Activated CD8-positive, alpha-beta memory T cell treated with anti-CD3 and anti-CD28 coated beads, Interleukin-2, amount 10 ng/mL, durations not matched to agents 7 days and 5 days (primary cell): ENCODE measurements at regions of chr16 and their contacts with region 1.

Region 1: DNA sequence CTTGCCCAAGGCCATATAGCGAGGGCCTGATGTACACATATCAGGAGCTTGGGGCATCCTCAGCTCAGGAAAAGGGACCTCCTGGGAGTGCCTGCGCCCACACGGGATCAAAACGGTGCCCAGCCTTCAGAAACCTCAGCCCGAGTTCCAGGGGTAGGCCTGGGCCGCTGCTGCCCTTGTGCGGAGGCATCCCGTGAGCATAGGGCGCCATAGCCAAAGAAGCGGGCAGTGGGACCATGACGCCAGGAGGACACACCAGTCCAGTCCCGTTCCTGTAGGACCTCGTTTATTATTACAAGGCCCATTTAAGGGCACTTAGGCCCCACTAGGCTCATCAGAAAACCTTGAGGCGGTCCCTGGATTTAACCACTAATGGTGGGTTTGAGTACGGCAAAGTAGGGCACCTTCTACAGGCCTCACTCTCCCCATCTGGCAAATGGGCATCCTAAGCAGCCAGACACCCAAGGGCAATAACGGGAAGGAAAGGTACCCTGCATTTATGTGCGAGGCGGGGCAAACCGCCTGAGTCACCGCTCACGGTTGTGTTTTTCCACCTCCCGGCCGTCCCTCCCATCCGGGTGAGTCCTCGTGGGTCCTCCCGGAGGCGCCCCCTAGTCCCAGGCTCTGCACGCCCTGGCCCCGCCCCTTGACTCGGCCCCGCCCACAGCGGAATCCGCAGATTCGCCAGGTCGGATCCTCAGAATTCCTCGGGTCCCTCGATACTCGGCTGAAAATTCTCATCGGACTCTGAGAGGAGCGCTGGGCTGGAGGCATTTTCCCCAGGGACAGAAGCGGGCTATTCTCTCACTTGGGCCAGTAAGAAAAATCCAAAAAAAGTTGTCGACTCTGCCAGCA is 726 bp upstream of the SETD1A start:
- DNase-seq: peak; percentile 92
- ATAC-seq: peak; percentile 76
- H3K4me3 Mint-ChIP-seq: peak overlapping the region; percentile 89
- H3K27ac Mint-ChIP-seq: peak overlapping the region; percentile 99
- H3K4me1 Mint-ChIP-seq: peaks cover 33% of the 10 kb centered on the region
- H3K27me3 Mint-ChIP-seq: no peaks in the 10 kb centered on the region

Region 2: DNA sequence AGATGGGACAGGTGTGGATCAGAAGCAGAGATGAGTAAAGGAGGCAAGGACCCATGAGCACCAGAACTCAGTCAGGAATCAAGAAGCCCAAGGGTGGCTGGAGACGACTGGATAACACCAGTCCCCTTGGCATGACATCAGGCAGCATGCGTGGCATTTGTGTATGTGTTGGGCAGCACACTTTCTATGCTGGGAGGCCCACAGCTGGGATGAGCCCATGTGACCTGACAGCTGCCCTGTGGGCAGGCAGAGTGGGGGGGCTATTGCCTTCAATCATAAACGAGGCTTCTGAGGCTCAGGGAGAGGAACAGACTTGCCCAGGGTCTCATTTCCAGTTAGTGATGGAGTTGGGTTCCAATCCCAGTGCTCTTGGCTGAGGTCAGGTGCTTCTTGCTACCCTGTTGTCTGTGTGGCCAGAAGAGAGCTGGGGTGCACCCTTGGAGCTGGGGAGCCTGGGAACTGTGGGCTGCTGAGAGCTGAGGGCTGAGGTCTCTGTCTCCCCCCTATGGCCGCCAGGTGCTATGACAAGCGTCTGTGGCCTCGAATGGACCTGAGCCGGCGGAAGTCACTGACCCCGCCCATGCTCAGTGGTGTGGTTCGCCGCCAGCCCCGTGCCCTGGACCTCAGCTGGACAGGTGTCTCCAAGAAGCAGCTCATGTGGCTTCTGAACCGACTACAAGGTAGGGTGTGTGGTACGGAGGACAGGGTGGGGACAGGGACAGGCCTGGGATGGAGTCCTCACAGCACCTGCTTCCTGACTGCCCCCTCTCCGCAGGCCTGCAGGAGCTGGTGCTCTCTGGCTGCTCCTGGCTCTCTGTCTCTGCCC is 15.0 kb before region 1 on chr16:
- CTCF ChIA-PET with region 1: interaction called, 21 read pairs
- DNase-seq: peak; percentile 86
- ATAC-seq: peak; percentile 96
- H3K4me3 Mint-ChIP-seq: peak overlapping the region; percentile 69
- H3K27ac Mint-ChIP-seq: peak overlapping the region; percentile 80
- H3K4me1 Mint-ChIP-seq: peaks cover 41% of the 10 kb centered on the region
- H3K27me3 Mint-ChIP-seq: no peaks in the 10 kb centered on the region

Region 3: DNA sequence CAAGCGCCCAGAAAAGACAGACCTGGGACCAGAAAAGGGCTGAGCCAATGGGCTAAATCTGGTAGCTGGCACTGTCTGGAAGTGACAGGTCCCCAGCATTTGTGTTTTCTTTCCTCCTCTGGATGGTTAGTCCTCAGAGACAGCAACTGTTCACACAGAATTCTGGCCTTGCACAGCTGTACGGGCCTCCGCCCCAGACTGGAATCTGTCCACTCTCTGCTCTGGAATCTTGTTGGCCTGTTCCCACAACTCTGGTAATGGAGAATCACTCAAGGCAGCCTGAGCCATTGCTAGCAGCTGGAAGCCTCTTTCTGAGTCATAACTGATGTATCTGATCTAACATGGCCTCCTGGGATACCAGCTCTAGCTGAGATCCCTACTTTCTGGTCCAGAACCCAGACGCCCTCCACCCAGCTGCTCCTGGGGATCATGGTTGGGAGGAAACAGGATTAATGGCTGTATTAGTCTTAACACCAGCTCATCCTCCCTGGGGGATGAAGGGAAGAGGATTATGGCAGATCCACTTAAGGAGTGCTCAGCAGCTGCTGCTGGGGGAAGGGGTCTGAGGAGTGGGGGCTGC is 108.1 kb after region 1 on chr16:
- CTCF ChIA-PET with region 1: interaction called, 13 read pairs
- DNase-seq: no peak
- ATAC-seq: peak; percentile 48
- H3K4me3 Mint-ChIP-seq: peak overlapping the region; percentile 53
- H3K27ac Mint-ChIP-seq: peak overlapping the region; percentile 90
- H3K4me1 Mint-ChIP-seq: peaks cover 63% of the 10 kb centered on the region
- H3K27me3 Mint-ChIP-seq: no peaks in the 10 kb centered on the region

Region 4: DNA sequence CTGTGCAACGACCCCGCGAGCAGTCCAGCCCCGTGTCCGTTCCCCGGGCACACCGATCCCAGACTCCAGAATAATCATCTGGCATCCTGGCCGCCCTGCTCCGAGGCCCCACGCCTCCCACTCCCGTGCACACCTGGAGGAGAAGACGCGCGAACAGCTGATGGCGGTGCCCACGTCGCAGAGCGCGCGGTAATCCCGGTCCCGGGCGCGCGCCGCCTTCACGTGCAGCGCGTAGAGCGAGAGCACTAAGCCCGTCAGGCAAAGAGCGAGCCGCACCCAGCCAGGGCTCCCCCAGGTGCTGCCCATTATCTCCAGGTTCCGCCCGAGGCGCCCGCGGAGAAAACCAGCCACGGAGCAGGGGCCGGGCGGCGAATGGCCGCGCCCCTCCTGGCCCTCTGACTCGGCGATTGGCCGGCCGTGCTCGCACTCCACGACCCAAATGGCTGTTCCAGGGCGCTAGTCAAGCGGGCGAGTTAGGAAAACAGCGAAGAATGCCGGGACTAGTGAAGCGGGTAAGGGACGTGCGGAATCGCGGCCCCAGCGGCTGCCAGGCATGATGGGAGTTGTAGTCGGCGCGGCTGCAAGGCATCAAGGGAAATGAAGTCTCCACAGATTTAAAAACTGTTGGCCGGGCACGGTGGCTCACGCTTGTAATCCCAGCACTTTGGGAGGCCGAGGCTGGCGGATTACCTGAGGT is 137.7 kb after region 1 on chr16 and contains the start of gene VKORC1:
- CTCF ChIA-PET with region 1: interaction called, 19 read pairs
- DNase-seq: peak; percentile 93
- ATAC-seq: peak; percentile 88
- H3K4me3 Mint-ChIP-seq: peak within 1 kb of the TSS; percentile 98
- H3K27ac Mint-ChIP-seq: peak within 1 kb of the TSS; percentile 90
- H3K4me1 Mint-ChIP-seq: peaks cover 30% of the 10 kb centered on the region
- H3K27me3 Mint-ChIP-seq: no peaks in the 10 kb centered on the region
- total RNA-seq, gene VKORC1: 66.3 to 68.9 TPM